ENCODE measurements at regions of chr5 and their contacts with region 1.

Region 1: DNA sequence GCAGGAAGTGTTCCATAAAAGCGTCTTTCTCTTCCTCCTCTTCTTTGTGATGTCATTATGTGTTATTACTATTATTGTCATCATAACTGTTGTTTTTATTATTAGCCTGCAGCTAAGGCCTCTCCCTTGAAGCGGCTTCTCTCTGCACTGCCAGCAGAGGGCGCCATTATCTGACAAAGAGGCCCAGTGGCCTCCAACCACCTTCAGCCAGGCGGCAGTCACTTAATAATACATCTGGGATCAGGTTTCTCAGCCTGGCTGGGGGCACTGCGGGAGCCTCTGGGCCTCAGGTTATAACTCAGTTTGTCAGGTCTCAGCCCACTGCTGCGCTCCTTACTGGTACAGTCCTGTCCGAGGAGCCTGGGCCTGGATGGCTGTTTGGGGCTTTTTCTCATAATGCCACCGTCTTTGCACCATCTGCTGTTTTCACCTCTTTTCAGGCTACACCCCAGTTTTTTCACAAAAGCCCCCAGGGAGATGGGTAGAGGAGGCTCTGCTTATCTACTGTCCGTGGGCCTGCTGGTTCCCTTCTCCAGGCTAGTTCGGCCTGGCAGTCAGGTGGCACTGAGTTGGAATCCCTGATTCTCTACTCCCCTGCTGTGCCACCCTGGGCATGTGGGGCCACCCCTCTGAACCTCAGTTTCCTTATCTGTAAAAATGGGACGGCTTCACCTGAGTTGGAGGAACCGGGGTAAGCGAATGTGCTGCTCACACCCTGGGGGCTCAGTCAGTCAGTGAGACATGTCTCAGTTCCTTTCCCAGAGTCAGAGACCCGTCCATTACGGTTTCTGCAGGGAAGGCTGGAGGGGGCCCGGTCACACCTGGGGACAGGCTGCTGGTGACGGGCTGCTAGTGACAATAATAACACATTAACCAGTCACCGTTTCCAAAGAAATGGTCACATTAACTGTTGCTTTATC is 282.1 kb downstream of the NSG2 start:
- DNase-seq: peak; percentile 92
- H3K4me3 Mint-ChIP-seq: no peak overlapping the region
- H3K27ac Mint-ChIP-seq: peak overlapping the region; percentile 24
- H3K4me1 Mint-ChIP-seq: peaks cover 33% of the 10 kb centered on the region
- H3K27me3 Mint-ChIP-seq: peaks cover 69% of the 10 kb centered on the region
- CTCF ChIP-seq: peak; percentile 95

Region 2: DNA sequence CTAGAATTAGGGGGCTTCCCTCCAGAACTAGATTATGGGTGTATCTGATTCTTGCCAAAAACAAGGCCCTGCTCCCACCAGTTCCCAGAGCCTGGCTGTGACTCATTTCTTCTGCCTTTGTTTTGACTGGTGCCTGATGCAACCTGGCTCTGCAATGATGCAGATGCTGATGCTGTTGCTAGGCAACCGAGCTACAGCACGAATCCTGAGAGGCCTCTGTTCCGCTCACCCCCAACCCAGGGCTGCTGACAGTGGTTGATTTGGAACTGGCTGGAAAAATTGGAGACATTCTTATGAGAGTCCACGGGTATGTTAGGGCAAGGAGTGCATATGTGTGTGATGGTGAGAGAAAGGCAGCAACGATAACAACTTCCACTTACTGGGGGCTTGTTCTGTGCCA is 181.8 kb before region 1 on chr5:
- CTCF ChIA-PET with region 1: no interaction called
- intact Hi-C with region 1: no loop called
- DNase-seq: no peak
- H3K4me3 Mint-ChIP-seq: no peak overlapping the region
- H3K27ac Mint-ChIP-seq: no peak overlapping the region
- H3K4me1 Mint-ChIP-seq: no peaks in the 10 kb centered on the region
- H3K27me3 Mint-ChIP-seq: peaks cover 57% of the 10 kb centered on the region
- CTCF ChIP-seq: no peak

Region 3: DNA sequence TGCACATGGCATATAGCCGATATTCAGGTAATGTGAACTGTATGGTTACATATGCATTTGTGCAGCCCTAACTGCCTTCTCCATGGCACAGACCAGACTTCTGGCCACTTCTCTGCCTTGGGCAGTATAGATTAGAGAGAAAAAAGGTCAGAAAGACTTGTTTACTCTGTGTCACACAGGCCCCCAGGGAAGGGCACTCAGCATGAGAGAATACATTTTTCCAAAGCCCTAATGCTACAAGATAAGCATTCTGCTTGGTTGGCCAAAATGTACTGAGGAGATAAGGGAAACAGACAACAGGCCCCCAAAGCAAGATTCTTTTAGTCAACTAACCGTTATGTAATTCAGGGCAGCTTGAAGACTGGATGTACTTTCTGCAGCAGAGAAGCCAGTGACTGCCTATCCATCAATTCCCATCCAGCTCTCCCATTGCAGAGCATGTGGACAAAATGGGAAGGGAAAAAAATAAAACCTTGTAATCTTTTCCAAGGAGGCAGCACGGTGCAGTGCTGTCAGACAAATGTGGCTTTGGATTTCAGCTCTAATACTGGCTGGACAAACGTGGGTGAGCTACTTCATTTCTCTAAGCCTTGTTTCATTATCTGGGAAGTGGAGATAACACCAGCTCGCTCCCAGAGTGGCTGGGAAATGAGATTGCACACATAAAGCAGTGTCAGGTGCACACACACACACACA is 76.1 kb before region 1 on chr5:
- CTCF ChIA-PET with region 1: no interaction called
- intact Hi-C with region 1: no loop called
- DNase-seq: no peak
- H3K4me3 Mint-ChIP-seq: no peak overlapping the region
- H3K27ac Mint-ChIP-seq: no peak overlapping the region
- H3K4me1 Mint-ChIP-seq: no peaks in the 10 kb centered on the region
- H3K27me3 Mint-ChIP-seq: peaks cover 24% of the 10 kb centered on the region
- CTCF ChIP-seq: no peak

Region 4: DNA sequence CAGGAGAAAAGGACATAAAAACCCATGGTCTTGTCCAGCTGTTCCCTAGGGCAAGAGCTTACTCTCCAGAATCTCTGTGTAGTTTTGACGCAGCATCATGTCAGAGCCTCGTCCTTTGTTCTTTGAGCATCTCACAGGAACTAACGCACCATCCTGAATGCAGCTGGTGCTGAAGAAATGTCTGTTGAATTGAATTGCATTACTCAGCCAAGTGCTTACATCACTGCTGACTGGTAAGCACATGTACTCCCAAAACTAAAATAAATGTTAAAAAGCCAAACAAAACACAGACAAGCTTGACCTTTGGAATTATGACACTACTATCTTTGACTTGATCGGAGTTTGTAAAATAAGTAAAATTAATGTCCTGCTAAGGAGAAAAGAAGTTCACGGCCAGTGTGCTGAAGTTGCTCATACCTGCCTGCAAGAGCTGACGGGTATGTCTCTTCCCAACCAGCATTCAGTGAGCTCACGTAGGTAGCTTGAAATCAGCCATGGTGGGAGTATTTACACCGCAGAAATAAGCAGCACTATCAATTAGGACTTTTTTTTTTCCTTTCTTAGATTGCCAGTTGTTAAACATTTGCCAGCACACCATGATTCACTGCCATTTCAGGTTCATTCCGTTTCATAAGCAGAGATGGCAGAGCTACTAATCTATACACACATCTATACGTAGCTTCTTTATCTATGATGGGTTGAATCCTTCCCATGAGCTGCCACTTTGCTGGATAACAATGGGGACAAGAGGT is 86.2 kb after region 1 on chr5:
- CTCF ChIA-PET with region 1: interaction called, 17 read pairs
- intact Hi-C with region 1: loop called (anchors 2 kb)
- DNase-seq: no peak
- H3K4me3 Mint-ChIP-seq: peak overlapping the region; percentile 11
- H3K27ac Mint-ChIP-seq: peak overlapping the region; percentile 64
- H3K4me1 Mint-ChIP-seq: peaks cover 53% of the 10 kb centered on the region
- H3K27me3 Mint-ChIP-seq: no peaks in the 10 kb centered on the region
- CTCF ChIP-seq: no peak

Region 5: DNA sequence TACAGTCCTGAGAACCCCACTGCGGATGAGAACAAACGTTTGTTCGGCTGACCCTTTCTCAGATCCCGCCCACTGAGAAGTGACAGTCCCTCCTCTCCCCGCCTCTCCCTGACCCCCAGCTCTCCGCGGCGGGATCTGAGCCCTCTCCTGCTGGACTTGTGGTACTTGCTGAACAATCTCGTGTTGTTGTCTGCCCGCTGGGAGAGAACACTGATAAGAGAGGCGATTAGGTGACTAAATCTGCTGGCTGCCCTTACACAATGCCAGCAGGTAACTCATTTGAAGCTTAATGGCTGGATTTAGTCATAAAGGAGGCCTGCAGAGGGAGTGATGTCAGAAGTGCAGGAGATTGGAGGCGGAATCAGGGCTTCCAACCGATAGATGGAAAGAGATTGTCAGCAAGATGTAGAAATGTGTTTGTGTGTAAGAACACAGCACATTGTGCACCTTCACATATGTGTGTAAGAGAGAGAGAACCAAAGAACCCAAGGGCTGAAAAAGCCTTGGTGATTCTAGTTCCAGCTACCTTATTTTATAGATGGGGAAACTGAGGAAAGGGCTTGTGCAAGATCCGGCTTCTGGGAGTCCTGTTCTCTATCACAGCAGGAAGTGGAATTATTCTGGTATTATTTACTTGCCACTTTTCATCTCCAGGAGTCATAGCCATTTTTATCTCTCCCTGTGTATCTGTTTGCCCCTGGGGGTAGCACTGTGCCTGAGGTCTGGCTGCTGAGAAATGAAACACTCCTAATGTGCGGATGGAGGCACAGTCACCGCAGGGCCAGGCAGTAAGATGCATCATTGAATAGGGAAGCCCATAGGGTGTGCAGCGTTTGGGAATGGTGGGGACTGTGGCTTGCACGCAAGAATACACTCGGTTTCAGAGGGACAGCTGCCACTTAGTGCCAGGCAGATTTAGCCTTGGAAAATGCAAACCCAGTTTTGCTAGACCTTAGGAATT is 193.1 kb after region 1 on chr5:
- CTCF ChIA-PET with region 1: no interaction called
- intact Hi-C with region 1: loop called (anchors 10 kb)
- DNase-seq: peak; percentile 73
- H3K4me3 Mint-ChIP-seq: peak overlapping the region; percentile 31
- H3K27ac Mint-ChIP-seq: peak overlapping the region; percentile 48
- H3K4me1 Mint-ChIP-seq: peaks cover 32% of the 10 kb centered on the region
- H3K27me3 Mint-ChIP-seq: no peaks in the 10 kb centered on the region
- CTCF ChIP-seq: no peak

Region 6: GRCh38 chr5:174608631-174609097 is 281.1 kb after region 1 on chr5:
- CTCF ChIA-PET with region 1: no interaction called
- intact Hi-C with region 1: loop called (anchors 10 kb)
- DNase-seq: peak; percentile 96
- H3K4me3 Mint-ChIP-seq: peak overlapping the region; percentile 26
- H3K27ac Mint-ChIP-seq: peak overlapping the region; percentile 63
- H3K4me1 Mint-ChIP-seq: peaks cover 15% of the 10 kb centered on the region
- H3K27me3 Mint-ChIP-seq: no peaks in the 10 kb centered on the region
- CTCF ChIP-seq: no peak

Region 7: GRCh38 chr5:174793684-174794328 is 466.2 kb after region 1 on chr5:
- CTCF ChIA-PET with region 1: interaction called, 4 read pairs
- intact Hi-C with region 1: loop called (anchors 1 kb)
- DNase-seq: peak; percentile 83
- H3K4me3 Mint-ChIP-seq: no peak overlapping the region
- H3K27ac Mint-ChIP-seq: no peak overlapping the region
- H3K4me1 Mint-ChIP-seq: no peaks in the 10 kb centered on the region
- H3K27me3 Mint-ChIP-seq: peaks cover 33% of the 10 kb centered on the region
- CTCF ChIP-seq: peak; percentile 89